Activated B cell treated with CpG ODN at 0.5 μM for 24 hours (primary cell): ENCODE measurements at regions of chr7 and their contacts with region 1.

Region 1: DNA sequence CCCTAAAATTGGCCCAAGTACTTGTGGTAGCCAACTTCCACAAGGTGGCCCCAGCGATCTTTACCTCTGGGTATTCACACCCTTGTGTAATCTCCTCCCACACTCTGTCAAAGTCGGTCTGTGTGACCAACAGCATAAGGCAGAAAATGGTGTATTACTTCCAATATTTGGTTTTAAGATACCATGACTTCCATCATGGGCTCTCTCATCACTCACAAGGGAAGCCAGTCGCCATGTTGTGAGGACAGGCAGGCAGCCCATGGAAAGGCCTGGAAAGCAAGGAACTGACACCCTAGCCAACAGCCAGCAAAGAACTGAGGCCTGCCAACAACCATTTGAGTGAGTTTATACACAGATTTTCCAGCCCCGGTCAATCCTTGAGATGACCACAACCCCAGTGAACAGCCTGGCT is 91.0 kb upstream of the KMT2E start:
- DNase-seq: peak; percentile 47
- ATAC-seq: peak; percentile 99
- H3K4me3 Mint-ChIP-seq: no peak overlapping the region
- H3K27ac Mint-ChIP-seq: peak overlapping the region; percentile 46
- H3K4me1 Mint-ChIP-seq: peaks cover 5% of the 10 kb centered on the region
- H3K27me3 Mint-ChIP-seq: no peaks in the 10 kb centered on the region
- CTCF ChIP-seq: peak; percentile 40

Region 2: GRCh38 chr7:103296901-103297836 is 1625.8 kb before region 1 on chr7 and contains the start of gene PMPCB:
- CTCF ChIA-PET with region 1: no interaction called
- POLR2A ChIA-PET with region 1: no interaction called
- intact Hi-C with region 1: loop called (anchors 1 kb)
- DNase-seq: peak; percentile 89
- ATAC-seq: peak; percentile 99
- H3K4me3 Mint-ChIP-seq: peak within 1 kb of the TSS; percentile 90
- H3K27ac Mint-ChIP-seq: peak within 1 kb of the TSS; percentile 84
- H3K4me1 Mint-ChIP-seq: peaks cover 24% of the 10 kb centered on the region
- H3K27me3 Mint-ChIP-seq: no peaks in the 10 kb centered on the region
- CTCF ChIP-seq: peak; percentile 37
- total RNA-seq, gene PMPCB: 76.9 and 80.8 TPM in 2 replicates

Region 3: GRCh38 chr7:104431930-104432329 is 491.1 kb before region 1 on chr7:
- CTCF ChIA-PET with region 1: no interaction called
- POLR2A ChIA-PET with region 1: no interaction called
- intact Hi-C with region 1: no loop called
- DNase-seq: no peak
- ATAC-seq: no peak
- H3K4me3 Mint-ChIP-seq: no peak overlapping the region
- H3K27ac Mint-ChIP-seq: no peak overlapping the region
- H3K4me1 Mint-ChIP-seq: no peaks in the 10 kb centered on the region
- H3K27me3 Mint-ChIP-seq: no peaks in the 10 kb centered on the region
- CTCF ChIP-seq: no peak

Region 4: GRCh38 chr7:104883718-104884452 is 39.1 kb before region 1 on chr7:
- CTCF ChIA-PET with region 1: interaction called, 129 read pairs
- POLR2A ChIA-PET with region 1: no interaction called
- intact Hi-C with region 1: loop called (anchors 1 kb)
- DNase-seq: peak; percentile 57
- ATAC-seq: peak; percentile 84
- H3K4me3 Mint-ChIP-seq: no peak overlapping the region
- H3K27ac Mint-ChIP-seq: no peak overlapping the region
- H3K4me1 Mint-ChIP-seq: peaks cover 6% of the 10 kb centered on the region
- H3K27me3 Mint-ChIP-seq: peaks cover 1% of the 10 kb centered on the region
- CTCF ChIP-seq: peak; percentile 21

Region 5: DNA sequence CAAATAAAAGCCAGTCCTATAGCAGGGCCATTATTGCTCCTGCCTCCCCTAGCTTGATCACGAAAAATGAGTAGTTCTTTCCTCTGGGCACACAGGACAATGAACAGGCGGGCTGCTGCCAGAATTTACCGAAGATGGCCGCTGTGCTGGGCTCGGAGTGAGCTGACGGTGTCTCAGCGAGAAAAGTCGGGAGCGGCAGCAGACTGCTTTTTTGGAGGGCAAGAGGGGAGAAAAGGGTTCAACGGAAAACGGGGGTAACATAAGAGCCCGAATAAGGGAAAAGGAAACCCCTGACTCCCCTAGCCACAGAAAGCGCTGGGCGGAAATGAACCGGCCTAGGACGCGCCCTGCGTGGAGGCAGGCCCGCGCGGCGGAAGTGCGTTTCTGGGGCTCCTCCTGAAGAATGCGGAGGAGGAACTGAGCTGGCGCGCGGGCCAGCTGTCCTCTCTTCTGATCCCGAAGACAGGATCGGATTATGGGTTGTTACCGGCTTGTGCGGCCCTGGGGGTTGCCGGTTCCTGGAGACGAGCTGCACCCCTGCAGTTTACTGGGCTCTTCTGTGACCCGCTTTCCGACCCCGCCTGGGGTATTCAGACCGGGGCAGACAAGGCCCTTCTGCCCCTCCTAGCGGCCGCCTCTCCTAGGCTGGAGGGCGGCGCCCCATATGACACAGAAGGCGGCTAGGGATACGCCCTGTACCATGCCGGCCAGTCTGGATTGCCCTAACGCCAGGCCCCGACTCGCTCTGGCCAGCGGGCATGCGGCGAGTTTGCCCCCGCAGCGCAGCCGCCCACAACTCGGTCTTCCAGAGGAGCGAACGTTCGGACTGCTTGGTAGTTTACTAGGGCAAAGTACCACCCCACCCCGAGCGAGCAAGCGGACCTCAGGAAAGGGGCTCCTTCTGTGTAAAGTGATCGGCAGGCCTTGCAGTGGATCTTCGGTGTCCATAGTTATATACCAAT is 60.8 kb after region 1 on chr7:
- CTCF ChIA-PET with region 1: interaction called, 92 read pairs
- POLR2A ChIA-PET with region 1: interaction called, 21 read pairs
- intact Hi-C with region 1: loop called (anchors 1 kb)
- DNase-seq: peak; percentile 80
- ATAC-seq: peak; percentile 89
- H3K4me3 Mint-ChIP-seq: peak overlapping the region; percentile 98
- H3K27ac Mint-ChIP-seq: peak overlapping the region; percentile 99
- H3K4me1 Mint-ChIP-seq: peaks cover 75% of the 10 kb centered on the region
- H3K27me3 Mint-ChIP-seq: no peaks in the 10 kb centered on the region
- CTCF ChIP-seq: no peak

Region 6: DNA sequence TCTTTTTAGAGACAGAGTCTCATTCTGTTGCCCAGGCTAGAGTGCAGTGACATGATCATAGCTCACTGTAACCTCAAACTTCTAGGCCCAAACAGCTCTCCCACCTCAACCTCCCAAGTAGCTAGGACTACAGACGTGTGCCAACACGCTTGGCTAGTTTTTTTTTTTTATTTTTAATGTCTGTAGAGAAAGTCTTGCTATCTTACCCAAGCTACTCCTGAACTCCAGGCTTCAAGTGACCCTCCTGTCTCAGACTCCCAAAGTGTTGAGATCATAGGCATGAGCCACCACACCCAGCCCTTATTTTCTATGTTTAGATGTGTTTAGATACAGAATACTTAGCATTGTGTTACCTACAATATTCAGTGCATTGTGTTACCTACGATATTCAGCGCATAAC is 137.4 kb after region 1 on chr7:
- CTCF ChIA-PET with region 1: no interaction called
- POLR2A ChIA-PET with region 1: no interaction called
- intact Hi-C with region 1: loop called (anchors 5 kb)
- DNase-seq: no peak
- ATAC-seq: no peak
- H3K4me3 Mint-ChIP-seq: no peak overlapping the region
- H3K27ac Mint-ChIP-seq: no peak overlapping the region
- H3K4me1 Mint-ChIP-seq: peaks cover 40% of the 10 kb centered on the region
- H3K27me3 Mint-ChIP-seq: no peaks in the 10 kb centered on the region
- CTCF ChIP-seq: no peak

Region 7: GRCh38 chr7:105589356-105590077 is 666.5 kb after region 1 on chr7:
- CTCF ChIA-PET with region 1: no interaction called
- POLR2A ChIA-PET with region 1: no interaction called
- intact Hi-C with region 1: loop called (anchors 1 kb)
- DNase-seq: no peak
- ATAC-seq: peak; percentile 89
- H3K4me3 Mint-ChIP-seq: no peak overlapping the region
- H3K27ac Mint-ChIP-seq: peak overlapping the region; percentile 27
- H3K4me1 Mint-ChIP-seq: peaks cover 38% of the 10 kb centered on the region
- H3K27me3 Mint-ChIP-seq: no peaks in the 10 kb centered on the region
- CTCF ChIP-seq: no peak